CD8-positive, alpha-beta T cell (primary cell): ENCODE measurements at regions of chr12 and their contacts with region 1.

Region 1: DNA sequence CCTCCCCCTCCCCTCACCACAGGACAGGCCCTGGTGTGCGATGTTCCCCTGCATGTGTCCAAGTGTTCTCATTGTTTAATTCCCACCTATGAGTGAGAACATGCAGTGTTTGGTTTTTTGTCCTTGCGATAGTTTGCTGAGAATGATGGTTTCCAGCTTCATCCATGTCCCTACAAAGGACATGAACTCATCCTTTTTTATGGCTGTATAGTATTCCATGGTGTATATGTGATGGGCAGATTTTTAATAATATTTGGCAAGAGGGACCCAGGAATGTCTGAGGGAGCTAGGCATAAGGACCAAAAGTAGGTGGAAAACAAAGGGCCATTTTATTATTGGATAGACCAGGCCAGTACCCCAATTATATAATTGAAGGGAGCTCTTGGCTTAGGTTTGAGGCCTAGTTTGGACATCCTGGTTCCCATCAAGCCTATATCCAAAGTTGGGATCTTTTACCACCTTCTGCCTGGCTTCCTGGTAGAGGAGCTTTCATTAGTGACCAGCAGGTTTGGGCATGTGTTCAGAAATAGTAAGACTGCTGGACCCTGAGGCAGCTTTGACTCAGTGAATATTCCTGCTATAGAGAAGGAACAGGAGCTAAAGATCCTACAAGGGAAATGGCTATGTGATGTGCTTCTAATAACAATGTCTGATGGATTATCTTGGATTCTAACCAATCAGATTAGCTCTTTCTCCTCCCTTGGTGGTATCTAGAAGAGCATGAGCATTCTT is 76.0 kb downstream of the CAND1 start:
- DNase-seq: no peak
- ATAC-seq: no peak
- H3K4me3 ChIP-seq: no peak overlapping the region
- H3K4me3 Mint-ChIP-seq: no peak overlapping the region
- H3K27ac ChIP-seq: no peak overlapping the region
- H3K27ac Mint-ChIP-seq: no peak overlapping the region
- H3K4me1 ChIP-seq: no peaks in the 10 kb centered on the region
- H3K4me1 Mint-ChIP-seq: no peaks in the 10 kb centered on the region
- H3K27me3 ChIP-seq: no peaks in the 10 kb centered on the region
- H3K27me3 Mint-ChIP-seq: no peaks in the 10 kb centered on the region
- CTCF ChIP-seq: no peak

Region 2: GRCh38 chr12:67320614-67321295 is 24.4 kb before region 1 on chr12:
- CTCF ChIA-PET with region 1: no interaction called
- POLR2A ChIA-PET with region 1: no interaction called
- intact Hi-C with region 1: loop called in 1 of 2 experiments (anchors 1 kb)
- DNase-seq: peak in 2 of 9 experiments; percentile 28 to 44
- ATAC-seq: peak; percentile 29
- H3K4me3 ChIP-seq: no peak overlapping the region
- H3K4me3 Mint-ChIP-seq: no peak overlapping the region
- H3K27ac ChIP-seq: no peak overlapping the region
- H3K27ac Mint-ChIP-seq: peak overlapping the region; percentile 23
- H3K4me1 ChIP-seq: no peaks in the 10 kb centered on the region
- H3K4me1 Mint-ChIP-seq: peaks cover 6% of the 10 kb centered on the region
- H3K27me3 ChIP-seq: no peaks in the 10 kb centered on the region
- H3K27me3 Mint-ChIP-seq: no peaks in the 10 kb centered on the region
- CTCF ChIP-seq: no peak